Activated CD4-positive, alpha-beta T cell treated with anti-CD3 and anti-CD28 coated beads for 36 hours (primary cell): ENCODE measurements at regions of chr19 and their contacts with region 1.

Region 1: GRCh38 chr19:36378625-36379509 is at the start of gene ZFP14:
- DNase-seq: peak; percentile 97
- ATAC-seq: peak; percentile 99
- H3K4me3 Mint-ChIP-seq: peak within 1 kb of the TSS; percentile 93
- H3K27ac Mint-ChIP-seq: peak within 1 kb of the TSS; percentile 88
- H3K4me1 Mint-ChIP-seq: peaks cover 18% of the 10 kb centered on the region
- H3K27me3 Mint-ChIP-seq: no peaks in the 10 kb centered on the region
- total RNA-seq, gene ZFP14: 1.4 to 1.8 TPM

Region 2: GRCh38 chr19:35124098-35125060 is 1254.5 kb before region 1 on chr19:
- CTCF ChIA-PET with region 1: no interaction called
- POLR2A ChIA-PET with region 1: no interaction called
- intact Hi-C with region 1: no loop called
- DNase-seq: peak; percentile 93
- ATAC-seq: peak; percentile 99
- H3K4me3 Mint-ChIP-seq: peak overlapping the region; percentile 72
- H3K27ac Mint-ChIP-seq: peak overlapping the region; percentile 20
- H3K4me1 Mint-ChIP-seq: peaks cover 13% of the 10 kb centered on the region
- H3K27me3 Mint-ChIP-seq: no peaks in the 10 kb centered on the region

Region 3: GRCh38 chr19:36113894-36114762 is 264.7 kb before region 1 on chr19:
- CTCF ChIA-PET with region 1: no interaction called
- POLR2A ChIA-PET with region 1: no interaction called
- intact Hi-C with region 1: no loop called
- DNase-seq: peak; percentile 53
- ATAC-seq: no peak
- H3K4me3 Mint-ChIP-seq: peak overlapping the region; percentile 98
- H3K27ac Mint-ChIP-seq: peak overlapping the region; percentile 93
- H3K4me1 Mint-ChIP-seq: peaks cover 28% of the 10 kb centered on the region
- H3K27me3 Mint-ChIP-seq: no peaks in the 10 kb centered on the region

Region 4: DNA sequence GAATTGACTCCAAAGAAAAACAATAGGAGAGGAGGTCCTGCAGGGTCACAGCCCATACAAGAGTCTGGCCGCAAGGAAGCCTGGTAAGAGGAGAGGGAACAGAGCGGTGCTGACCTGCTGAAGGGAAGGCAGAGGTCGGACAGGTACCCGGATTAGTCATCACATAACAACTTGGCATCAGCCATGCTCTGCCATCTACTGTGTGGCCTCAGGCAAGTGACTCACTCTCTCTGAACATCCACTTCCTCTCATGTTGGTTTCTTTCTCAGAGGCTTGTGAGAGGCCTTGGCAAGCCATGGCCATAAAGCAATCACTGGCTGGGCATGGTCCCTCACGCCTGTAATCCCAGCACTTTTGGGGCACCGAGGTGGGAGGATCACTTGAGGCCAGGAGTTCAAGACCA is 246.4 kb before region 1 on chr19:
- CTCF ChIA-PET with region 1: interaction called, 4 read pairs
- POLR2A ChIA-PET with region 1: no interaction called
- intact Hi-C with region 1: loop called in 1 of 2 experiments (anchors 1 kb)
- DNase-seq: peak; percentile 74
- ATAC-seq: peak; percentile 77
- H3K4me3 Mint-ChIP-seq: no peak overlapping the region
- H3K27ac Mint-ChIP-seq: peak overlapping the region; percentile 80
- H3K4me1 Mint-ChIP-seq: peaks cover 33% of the 10 kb centered on the region
- H3K27me3 Mint-ChIP-seq: no peaks in the 10 kb centered on the region

Region 5: DNA sequence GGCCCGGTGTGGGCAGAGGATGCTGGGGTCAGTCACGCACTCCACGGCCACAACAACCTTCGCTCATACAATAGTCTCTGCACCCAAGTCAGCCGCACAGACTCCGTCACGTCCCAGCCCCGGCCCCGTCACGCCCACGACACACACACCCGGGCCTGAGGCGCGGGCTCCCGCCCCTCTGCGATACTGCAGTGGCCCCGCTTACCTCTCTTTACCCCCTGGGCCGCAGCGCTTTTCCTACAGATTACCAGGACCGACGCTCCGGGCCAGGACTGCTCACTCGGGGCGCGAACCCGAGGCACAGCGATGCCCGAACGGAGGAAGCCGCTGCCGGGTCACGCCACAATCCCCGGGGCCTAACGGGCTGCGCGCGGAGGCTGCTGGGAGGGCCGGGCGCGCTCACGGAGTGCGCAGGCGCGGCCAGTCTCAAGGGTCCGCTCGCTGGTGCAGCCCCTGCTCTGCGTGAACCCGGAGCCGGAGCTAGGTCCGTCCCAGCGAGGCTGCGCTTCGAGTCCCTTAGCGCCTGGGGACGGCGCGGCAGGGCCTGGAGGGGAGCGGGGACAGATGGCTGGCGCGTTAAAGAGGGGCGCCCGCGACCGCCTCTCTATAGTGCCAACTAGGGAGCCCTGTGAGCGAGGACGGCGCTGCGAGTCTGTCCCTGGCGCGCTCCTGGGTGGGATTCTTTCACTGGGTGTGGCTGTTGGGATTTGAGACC is 39.6 kb after region 1 on chr19 and contains the start of gene ZFP82:
- CTCF ChIA-PET with region 1: interaction called, 7 read pairs
- POLR2A ChIA-PET with region 1: interaction called, 4 read pairs
- intact Hi-C with region 1: loop called (anchors 1 kb)
- DNase-seq: peak; percentile 89
- ATAC-seq: peak; percentile 90
- H3K4me3 Mint-ChIP-seq: peak within 1 kb of the TSS; percentile 94
- H3K27ac Mint-ChIP-seq: peak within 1 kb of the TSS; percentile 97
- H3K4me1 Mint-ChIP-seq: peaks cover 12% of the 10 kb centered on the region
- H3K27me3 Mint-ChIP-seq: peaks cover 13% of the 10 kb centered on the region
- total RNA-seq, gene ZFP82: 8.4 to 8.8 TPM

Region 6: DNA sequence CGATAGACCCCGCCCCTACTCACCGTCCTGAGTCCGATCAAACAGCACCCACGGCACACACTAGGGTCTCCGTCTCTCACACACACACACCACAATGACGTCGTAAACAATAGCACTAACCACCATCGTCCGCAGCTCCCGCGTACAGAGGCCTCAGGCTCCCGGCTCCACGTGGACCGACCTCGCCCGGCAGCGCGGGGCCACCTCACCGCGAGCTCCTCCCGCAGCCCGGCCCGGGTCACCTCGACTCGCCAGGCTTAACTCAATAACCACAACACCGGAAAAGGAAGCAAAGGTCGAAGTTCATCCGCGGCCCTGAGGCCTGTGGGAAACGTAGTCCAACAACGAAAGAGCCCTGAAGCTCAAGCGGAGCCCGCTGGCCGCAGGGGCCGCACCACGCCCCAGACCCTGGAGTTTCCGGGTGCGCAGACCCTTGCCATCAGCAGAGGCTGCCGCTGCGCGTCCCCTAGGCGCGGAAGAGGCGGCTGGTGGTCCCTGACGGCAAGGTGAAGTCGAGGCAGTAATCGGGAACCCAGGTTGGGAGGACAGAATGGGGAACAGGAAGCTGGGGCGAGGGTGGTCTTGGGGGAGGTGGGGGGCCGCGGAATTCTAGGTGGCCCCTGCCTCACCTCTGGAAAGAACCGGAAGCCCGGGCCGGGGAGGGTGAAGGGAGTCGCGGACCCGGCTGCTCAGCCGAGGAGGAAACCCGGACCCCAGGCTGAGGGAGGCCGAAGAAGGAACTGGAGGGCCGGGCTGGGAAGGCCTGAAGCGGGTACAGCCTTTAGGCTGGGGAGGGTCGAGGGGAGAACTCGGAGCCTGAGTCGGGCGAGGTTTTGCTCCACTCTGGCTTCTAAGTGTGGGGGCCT is 194.4 kb after region 1 on chr19 and contains the start of gene ZNF529:
- CTCF ChIA-PET with region 1: no interaction called
- POLR2A ChIA-PET with region 1: no interaction called
- intact Hi-C with region 1: loop called in 1 of 2 experiments (anchors 1 kb)
- DNase-seq: peak; percentile 91
- ATAC-seq: peak; percentile 90
- H3K4me3 Mint-ChIP-seq: peak within 1 kb of the TSS; percentile 83
- H3K27ac Mint-ChIP-seq: peak within 1 kb of the TSS; percentile 93
- H3K4me1 Mint-ChIP-seq: peaks cover 27% of the 10 kb centered on the region
- H3K27me3 Mint-ChIP-seq: no peaks in the 10 kb centered on the region
- total RNA-seq, gene ZNF529: 12.5 to 19.2 TPM

Region 7: GRCh38 chr19:36665832-36666231 is 287.0 kb after region 1 on chr19:
- CTCF ChIA-PET with region 1: no interaction called
- POLR2A ChIA-PET with region 1: no interaction called
- intact Hi-C with region 1: loop called in 1 of 2 experiments (anchors 1 kb)
- DNase-seq: no peak
- ATAC-seq: no peak
- H3K4me3 Mint-ChIP-seq: peak overlapping the region; percentile 98
- H3K27ac Mint-ChIP-seq: peak overlapping the region; percentile 99
- H3K4me1 Mint-ChIP-seq: peaks cover 26% of the 10 kb centered on the region
- H3K27me3 Mint-ChIP-seq: no peaks in the 10 kb centered on the region

Region 8: DNA sequence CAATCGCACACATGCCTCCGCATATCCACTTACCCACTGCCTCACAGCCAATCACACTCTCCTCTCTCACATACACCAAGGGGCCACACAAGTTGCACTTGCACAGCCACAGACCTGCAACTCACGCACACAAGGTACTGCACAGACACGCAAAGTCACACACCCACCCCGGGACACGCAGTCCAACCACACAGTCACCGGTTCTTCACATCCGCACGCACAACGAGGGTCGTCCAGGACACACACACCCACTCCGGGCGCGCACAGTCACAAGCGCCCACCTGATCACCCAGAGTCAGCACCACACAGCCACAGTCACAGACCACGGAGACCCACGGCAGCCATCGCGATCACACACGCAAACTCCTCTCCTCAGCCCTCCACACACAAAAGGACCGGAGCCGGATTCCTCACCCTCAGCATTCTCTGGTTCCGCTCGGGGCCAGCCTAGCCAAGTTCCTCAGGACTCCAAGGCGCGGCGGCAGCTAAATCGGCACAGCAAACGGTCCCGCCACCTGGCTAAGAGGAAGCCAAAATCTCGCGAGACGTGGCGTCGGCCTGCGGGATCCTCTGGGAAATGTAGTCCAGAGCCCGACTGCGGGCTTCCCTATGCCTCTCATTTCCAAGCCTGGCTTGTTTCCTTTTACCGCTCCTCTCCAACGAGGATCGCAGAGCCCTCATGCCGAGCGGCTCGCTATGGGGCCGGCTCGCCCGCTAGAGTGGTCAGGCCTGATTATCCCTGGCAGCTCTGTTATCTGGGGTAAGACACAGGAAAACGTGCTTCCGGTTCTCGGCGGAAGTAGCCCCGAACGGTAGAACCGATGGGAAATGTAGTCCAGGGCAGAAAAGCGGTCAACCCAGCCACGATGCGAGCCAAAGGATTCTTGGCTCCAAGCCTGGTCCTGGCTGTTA is 393.7 kb after region 1 on chr19 and contains the start of gene ZNF850:
- CTCF ChIA-PET with region 1: no interaction called
- POLR2A ChIA-PET with region 1: no interaction called
- intact Hi-C with region 1: loop called in 1 of 2 experiments (anchors 1 kb)
- DNase-seq: peak; percentile 97
- ATAC-seq: peak; percentile 92
- H3K4me3 Mint-ChIP-seq: peak within 1 kb of the TSS; percentile 99
- H3K27ac Mint-ChIP-seq: peak within 1 kb of the TSS; percentile 97
- H3K4me1 Mint-ChIP-seq: peaks cover 20% of the 10 kb centered on the region
- H3K27me3 Mint-ChIP-seq: no peaks in the 10 kb centered on the region
- total RNA-seq, gene ZNF850: 7.0 to 10.7 TPM

Region 9: DNA sequence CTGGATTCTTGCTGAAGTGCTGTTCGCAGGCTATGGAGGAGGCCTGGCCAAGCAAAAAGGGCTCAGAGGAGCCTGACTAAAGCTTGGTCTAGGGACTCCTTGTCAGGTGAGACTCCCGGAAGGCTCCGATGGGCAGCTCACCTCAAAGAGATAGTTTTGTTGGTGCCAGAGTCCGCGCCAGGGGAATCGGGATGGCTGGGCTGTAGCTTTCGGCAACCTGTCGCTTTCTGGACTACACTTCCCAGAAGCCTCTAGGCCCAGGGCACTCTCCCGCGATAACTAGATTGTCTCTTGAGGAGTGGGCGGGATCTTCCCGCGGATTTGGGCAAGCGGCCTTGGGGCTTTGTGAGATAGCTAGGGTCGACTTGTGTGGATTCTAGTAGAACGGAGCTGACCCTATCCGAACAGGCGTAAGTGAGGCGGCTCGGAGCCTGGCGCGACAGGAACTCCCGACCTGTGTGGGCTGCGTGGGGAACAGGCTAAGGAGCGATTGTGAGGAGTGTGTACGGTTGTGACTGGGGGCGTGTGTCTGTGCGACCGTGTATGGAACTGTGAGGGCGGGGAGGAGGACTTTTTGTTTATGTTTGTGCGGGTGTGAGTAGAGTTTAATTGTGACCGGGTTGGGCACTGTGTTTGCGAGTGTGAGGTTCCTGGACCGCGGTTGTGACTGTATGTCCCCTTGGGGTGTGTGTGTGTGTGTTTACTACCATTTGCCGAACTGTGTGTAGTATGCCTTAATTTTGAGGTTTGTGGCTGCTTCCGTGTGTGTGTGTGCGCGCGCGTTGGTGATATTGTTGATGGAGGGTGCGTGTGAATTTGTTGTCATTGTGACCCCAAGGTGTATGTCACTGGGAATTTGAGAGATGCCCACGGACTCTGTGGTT is 471.9 kb after region 1 on chr19 and contains the start of gene ZNF345:
- CTCF ChIA-PET with region 1: no interaction called
- POLR2A ChIA-PET with region 1: no interaction called
- intact Hi-C with region 1: loop called in 1 of 2 experiments (anchors 1 kb)
- DNase-seq: peak; percentile 91
- ATAC-seq: peak; percentile 82
- H3K4me3 Mint-ChIP-seq: no peak within 1 kb of the TSS
- H3K27ac Mint-ChIP-seq: no peak within 1 kb of the TSS
- H3K4me1 Mint-ChIP-seq: peaks cover 10% of the 10 kb centered on the region
- H3K27me3 Mint-ChIP-seq: no peaks in the 10 kb centered on the region
- total RNA-seq, gene ZNF345: 3.5 to 4.6 TPM